Vagina (tissue), 2 donors: ENCODE measurements at regions of chr20 and their contacts with region 1.

Region 1: GRCh38 chr20:57053798-57054552 is 212.5 kb downstream of the BMP7 start:
- DNase-seq: no peak
- H3K4me3 ChIP-seq: no peak overlapping the region
- H3K27ac ChIP-seq: no peak overlapping the region
- H3K4me1 ChIP-seq: peaks cover 15% of the 10 kb centered on the region
- H3K27me3 ChIP-seq: no peaks in the 10 kb centered on the region
- CTCF ChIP-seq: no peak
- POLR2A ChIP-seq: no peak

Region 2: DNA sequence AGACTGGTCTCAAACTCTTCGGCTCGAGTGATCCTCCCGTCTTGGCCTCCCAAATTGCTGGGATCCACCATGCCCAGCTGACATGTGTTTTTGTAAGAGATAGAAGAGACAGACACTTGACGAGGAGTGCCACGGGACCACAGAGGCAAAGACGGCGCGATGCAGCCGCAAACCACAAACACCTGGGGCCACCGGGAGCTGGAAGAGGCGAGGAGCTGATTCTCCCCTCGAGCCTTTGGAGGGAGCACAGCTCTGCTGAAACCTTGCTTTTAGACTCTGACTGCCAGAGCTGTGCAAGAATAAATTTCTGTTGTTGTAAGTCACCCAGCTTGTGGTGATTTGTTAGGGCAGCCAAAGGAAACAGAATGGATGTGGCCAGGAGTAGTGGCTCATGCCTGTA is 378.0 kb before region 1 on chr20:
- intact Hi-C with region 1: no loop called
- DNase-seq: no peak
- H3K4me3 ChIP-seq: no peak overlapping the region
- H3K27ac ChIP-seq: no peak overlapping the region
- H3K4me1 ChIP-seq: no peaks in the 10 kb centered on the region
- H3K27me3 ChIP-seq: no peaks in the 10 kb centered on the region
- CTCF ChIP-seq: no peak
- POLR2A ChIP-seq: no peak

Region 3: GRCh38 chr20:57006411-57007170 is 47.4 kb before region 1 on chr20:
- intact Hi-C with region 1: no loop called
- DNase-seq: no peak
- H3K4me3 ChIP-seq: no peak overlapping the region
- H3K27ac ChIP-seq: no peak overlapping the region
- H3K4me1 ChIP-seq: peaks cover 15% of the 10 kb centered on the region
- H3K27me3 ChIP-seq: no peaks in the 10 kb centered on the region
- CTCF ChIP-seq: no peak
- POLR2A ChIP-seq: no peak

Region 4: GRCh38 chr20:57148263-57148662 is 94.3 kb after region 1 on chr20:
- intact Hi-C with region 1: no loop called
- DNase-seq: no peak
- H3K4me3 ChIP-seq: no peak overlapping the region
- H3K27ac ChIP-seq: no peak overlapping the region
- H3K4me1 ChIP-seq: no peaks in the 10 kb centered on the region
- H3K27me3 ChIP-seq: no peaks in the 10 kb centered on the region
- CTCF ChIP-seq: no peak
- POLR2A ChIP-seq: no peak

Region 5: DNA sequence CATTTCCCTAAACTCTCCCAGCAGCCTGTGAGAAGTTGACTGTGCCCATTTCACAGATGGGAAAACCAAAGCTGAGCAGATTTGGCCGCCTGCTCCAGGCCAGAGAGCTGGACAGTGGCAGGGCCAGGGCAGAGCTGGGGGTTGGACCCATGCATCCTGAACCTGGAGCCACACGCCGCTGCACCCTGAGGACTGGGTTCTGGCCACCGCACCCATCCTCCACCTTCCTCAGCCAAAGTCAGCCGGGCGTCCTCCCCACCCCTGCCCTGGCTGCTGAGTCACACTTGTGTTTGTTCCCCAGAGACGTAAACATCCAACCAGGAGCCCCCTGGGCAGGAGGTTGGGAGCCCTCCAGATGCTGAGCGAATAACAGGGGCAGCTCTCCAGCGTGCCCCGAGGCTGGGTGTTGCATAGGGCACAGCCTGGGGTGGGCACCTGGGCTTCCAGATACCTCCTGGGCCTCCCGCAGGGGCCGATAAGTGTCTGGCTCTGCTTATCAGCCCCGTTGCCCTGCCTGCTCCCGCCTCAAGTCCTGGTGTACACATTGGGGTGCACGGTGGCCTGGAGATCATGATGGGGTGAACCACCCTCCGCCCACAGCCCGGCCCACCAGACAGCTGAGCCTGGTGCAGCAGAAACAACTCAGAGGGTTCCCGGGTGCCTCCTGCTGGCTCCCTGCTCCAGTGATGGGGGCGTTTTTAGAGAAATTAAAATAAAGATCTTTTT is 361.1 kb after region 1 on chr20:
- intact Hi-C with region 1: no loop called
- DNase-seq: no peak
- H3K4me3 ChIP-seq: no peak overlapping the region
- H3K27ac ChIP-seq: no peak overlapping the region
- H3K4me1 ChIP-seq: no peaks in the 10 kb centered on the region
- H3K27me3 ChIP-seq: no peaks in the 10 kb centered on the region
- CTCF ChIP-seq: no peak
- POLR2A ChIP-seq: no peak

Region 6: DNA sequence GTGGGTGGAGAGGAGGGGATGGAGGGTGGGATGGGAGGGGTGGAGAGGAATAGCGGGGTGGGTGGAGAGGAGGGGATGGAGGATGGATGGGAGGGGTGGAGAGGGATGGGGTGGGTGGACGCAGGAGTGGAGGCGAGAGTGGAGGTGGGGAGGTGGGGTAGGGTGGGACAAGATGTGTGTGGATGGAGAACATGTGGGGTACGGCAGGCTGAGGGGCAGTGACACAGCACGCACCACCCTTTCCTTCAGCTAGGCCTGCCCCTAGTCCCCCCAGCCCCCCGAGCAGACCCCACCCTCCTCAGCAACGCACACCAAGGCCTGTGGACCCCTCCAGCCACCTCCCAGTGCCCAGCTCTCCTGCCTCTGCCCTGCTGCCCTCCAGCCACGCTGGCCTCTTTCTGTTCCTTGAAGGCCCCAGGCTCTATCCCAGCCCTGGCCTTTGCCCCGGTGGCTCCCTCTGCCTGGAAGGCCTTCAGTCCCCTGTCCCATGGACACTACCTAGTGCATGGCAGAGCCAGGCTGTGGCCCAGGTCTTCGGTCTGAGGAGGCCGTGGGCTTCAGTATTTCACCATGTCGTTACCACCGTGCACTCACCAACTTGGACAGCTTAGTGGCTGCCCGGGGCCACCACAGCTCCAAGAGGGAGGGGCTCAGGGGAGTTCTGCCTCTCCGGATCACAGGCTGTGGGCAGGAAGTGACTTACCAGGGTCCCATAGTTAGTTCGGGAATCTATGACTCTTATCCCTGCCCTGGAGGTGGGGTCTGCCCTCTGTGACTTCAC is 734.2 kb after region 1 on chr20:
- intact Hi-C with region 1: loop called (anchors 5 kb)
- DNase-seq: no peak
- H3K4me3 ChIP-seq: no peak overlapping the region
- H3K27ac ChIP-seq: no peak overlapping the region
- H3K4me1 ChIP-seq: no peaks in the 10 kb centered on the region
- H3K27me3 ChIP-seq: no peaks in the 10 kb centered on the region
- CTCF ChIP-seq: no peak
- POLR2A ChIP-seq: no peak